ENCODE measurements at regions of chr3 and their contacts with region 1.

Region 1: DNA sequence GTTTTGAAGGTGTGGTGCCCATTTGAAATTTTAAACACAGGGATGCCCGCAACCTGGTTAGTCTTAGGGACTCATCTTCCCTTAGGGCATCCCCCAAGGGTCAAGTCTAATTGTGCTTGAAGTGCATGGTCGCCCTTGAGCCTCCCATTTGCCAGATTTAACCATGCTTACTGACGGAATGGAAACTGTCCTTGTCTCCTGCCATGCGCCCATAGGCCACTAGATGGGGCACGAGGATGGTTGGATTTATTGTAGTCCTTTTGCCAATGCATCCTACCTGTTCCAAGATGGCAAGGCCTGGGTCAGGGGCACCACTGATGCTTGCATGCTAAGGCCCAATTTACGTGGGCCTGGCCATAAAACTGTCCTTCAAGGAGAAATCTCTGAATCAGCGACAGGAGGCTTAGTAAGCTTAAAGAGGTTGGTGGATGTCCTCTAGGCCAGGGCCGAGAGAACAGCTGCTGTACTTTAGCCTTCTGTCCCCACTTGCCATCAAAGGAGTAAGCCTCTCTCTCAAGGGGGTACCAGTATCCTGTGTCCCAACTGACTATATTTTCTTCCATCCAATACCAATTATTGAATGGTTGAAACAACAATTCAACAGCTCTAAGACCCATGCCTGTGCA is 355.4 kb downstream of the OTOL1 start:
- DNase-seq: no peak
- H3K4me3 ChIP-seq: no peak overlapping the region
- H3K27ac ChIP-seq: no peak overlapping the region
- H3K4me1 ChIP-seq: no peaks in the 10 kb centered on the region
- H3K27me3 ChIP-seq: no peaks in the 10 kb centered on the region
- CTCF ChIP-seq: peak; percentile 32 to 61
- POLR2A ChIP-seq: no peak

Region 2: GRCh38 chr3:161890147-161890625 is 38.1 kb after region 1 on chr3:
- CTCF ChIA-PET with region 1: interaction called, 3 read pairs
- POLR2A ChIA-PET with region 1: no interaction called
- dilution Hi-C with region 1: no loop called
- intact Hi-C with region 1: loop called (anchors 1 kb)
- DNase-seq: peak; percentile 18
- H3K4me3 ChIP-seq: no peak overlapping the region
- H3K27ac ChIP-seq: peak overlapping the region; percentile 33
- H3K4me1 ChIP-seq: no peaks in the 10 kb centered on the region
- H3K27me3 ChIP-seq: no peaks in the 10 kb centered on the region
- CTCF ChIP-seq: no peak
- POLR2A ChIP-seq: no peak

Region 3: DNA sequence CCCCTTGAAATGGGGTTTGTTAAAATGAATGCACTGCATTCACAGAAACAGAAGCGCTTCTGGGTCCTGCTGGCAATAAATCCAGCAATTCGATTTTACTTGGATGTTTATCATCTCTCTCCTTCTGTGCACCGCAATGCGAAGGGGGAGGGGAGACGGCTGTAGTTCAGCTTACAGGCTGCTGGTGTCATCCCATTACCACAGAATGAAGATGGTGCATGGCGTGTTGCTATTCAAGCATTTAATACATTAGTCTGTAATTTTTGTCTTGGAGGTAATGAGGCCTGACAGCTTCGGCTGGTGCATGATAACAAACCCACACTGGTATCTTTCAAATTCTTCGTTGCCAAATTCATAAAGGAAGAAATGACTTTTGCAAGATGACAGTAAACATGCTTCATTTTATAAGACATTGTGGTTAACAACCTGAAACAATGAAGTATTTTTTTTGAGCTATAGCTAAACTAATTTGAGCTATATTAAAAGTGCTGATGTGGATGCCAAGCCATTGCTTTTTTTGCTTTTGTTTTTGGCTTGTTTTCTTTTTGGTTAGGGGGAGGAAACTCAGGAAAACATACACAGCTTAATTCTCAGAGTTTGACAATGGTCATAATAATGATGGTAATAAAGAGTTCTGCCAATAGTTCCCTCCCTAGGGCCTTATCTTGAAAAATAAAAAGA is 62.8 kb after region 1 on chr3:
- CTCF ChIA-PET with region 1: no interaction called
- POLR2A ChIA-PET with region 1: no interaction called
- dilution Hi-C with region 1: no loop called
- intact Hi-C with region 1: loop called (anchors 2 kb)
- DNase-seq: no peak
- H3K4me3 ChIP-seq: no peak overlapping the region
- H3K27ac ChIP-seq: no peak overlapping the region
- H3K4me1 ChIP-seq: no peaks in the 10 kb centered on the region
- H3K27me3 ChIP-seq: no peaks in the 10 kb centered on the region
- CTCF ChIP-seq: no peak
- POLR2A ChIP-seq: no peak

Region 4: GRCh38 chr3:162052636-162053035 is 200.6 kb after region 1 on chr3:
- CTCF ChIA-PET with region 1: no interaction called
- POLR2A ChIA-PET with region 1: no interaction called
- dilution Hi-C with region 1: no loop called
- intact Hi-C with region 1: no loop called
- DNase-seq: no peak
- H3K4me3 ChIP-seq: no peak overlapping the region
- H3K27ac ChIP-seq: no peak overlapping the region
- H3K4me1 ChIP-seq: no peaks in the 10 kb centered on the region
- H3K27me3 ChIP-seq: no peaks in the 10 kb centered on the region
- CTCF ChIP-seq: no peak
- POLR2A ChIP-seq: no peak

Region 5: GRCh38 chr3:162139841-162140240 is 287.8 kb after region 1 on chr3:
- CTCF ChIA-PET with region 1: no interaction called
- POLR2A ChIA-PET with region 1: no interaction called
- dilution Hi-C with region 1: no loop called
- intact Hi-C with region 1: loop called (anchors 1 kb)
- DNase-seq: no peak
- H3K4me3 ChIP-seq: no peak overlapping the region
- H3K27ac ChIP-seq: no peak overlapping the region
- H3K4me1 ChIP-seq: no peaks in the 10 kb centered on the region
- H3K27me3 ChIP-seq: no peaks in the 10 kb centered on the region
- CTCF ChIP-seq: no peak
- POLR2A ChIP-seq: no peak

Region 6: DNA sequence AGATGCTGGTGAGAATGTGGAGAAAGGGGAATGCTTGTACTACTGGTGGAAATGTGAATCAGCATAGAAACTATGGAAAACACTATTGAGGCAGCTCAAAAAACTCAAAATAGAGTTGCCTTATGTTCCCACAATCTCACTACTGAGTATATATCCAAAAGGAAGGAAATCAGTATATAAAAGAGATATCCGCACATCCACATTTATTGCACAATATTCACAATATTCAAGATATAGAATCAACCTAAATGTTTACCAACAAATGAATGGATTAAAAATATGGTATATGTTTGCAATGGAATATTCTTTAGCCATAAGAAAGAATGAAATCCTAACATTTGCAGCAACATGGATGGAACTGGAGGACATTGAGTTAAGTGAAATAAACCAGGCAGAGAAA is 331.4 kb after region 1 on chr3:
- CTCF ChIA-PET with region 1: no interaction called
- POLR2A ChIA-PET with region 1: no interaction called
- dilution Hi-C with region 1: no loop called
- intact Hi-C with region 1: loop called (anchors 5 kb)
- DNase-seq: no peak
- H3K4me3 ChIP-seq: no peak overlapping the region
- H3K27ac ChIP-seq: no peak overlapping the region
- H3K4me1 ChIP-seq: no peaks in the 10 kb centered on the region
- H3K27me3 ChIP-seq: no peaks in the 10 kb centered on the region
- CTCF ChIP-seq: no peak
- POLR2A ChIP-seq: no peak

Region 7: DNA sequence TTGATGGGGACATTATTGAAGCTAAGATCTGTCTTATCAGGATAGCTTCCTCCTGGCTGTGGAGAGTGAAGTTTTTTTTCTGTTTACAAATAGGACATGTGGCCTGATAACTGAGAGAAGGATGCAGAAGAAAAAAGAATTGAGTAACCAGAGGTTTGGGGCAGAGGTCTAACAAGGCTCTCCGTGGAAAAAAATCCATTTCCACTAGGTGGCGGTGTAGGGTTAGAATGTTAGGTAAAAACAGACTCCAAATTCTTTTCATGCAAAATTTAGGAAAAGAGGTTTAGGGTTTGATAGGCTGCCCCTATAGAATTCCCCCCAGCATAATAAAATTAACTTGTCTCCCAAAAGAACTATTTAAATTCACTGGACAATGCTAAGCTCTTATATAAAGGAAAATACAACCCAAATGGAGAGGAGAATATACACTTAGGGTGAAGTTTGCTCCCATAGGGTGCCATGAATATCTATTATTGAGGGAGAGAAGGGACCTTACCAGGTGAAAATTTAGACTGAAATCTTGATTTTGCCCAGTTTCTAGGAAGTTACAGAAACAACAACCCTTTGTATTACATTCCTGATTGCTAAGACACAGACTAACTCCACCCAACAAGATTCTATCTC is 1204.9 kb after region 1 on chr3:
- CTCF ChIA-PET with region 1: no interaction called
- POLR2A ChIA-PET with region 1: no interaction called
- dilution Hi-C with region 1: no loop called
- intact Hi-C with region 1: loop called (anchors 5 kb)
- DNase-seq: no peak
- H3K4me3 ChIP-seq: no peak overlapping the region
- H3K27ac ChIP-seq: no peak overlapping the region
- H3K4me1 ChIP-seq: no peaks in the 10 kb centered on the region
- H3K27me3 ChIP-seq: no peaks in the 10 kb centered on the region
- CTCF ChIP-seq: peak; percentile 24 to 29
- POLR2A ChIP-seq: no peak